ENCODE measurements at regions of chr19 and their contacts with region 1.

Region 1: GRCh38 chr19:29545866-29546582 is 20.2 kb downstream of the VSTM2B start:
- DNase-seq: no peak
- ATAC-seq: no peak
- H3K4me3 ChIP-seq: no peak overlapping the region
- H3K4me3 Mint-ChIP-seq: no peak overlapping the region
- H3K27ac ChIP-seq: no peak overlapping the region
- H3K27ac Mint-ChIP-seq: no peak overlapping the region
- H3K4me1 ChIP-seq: no peaks in the 10 kb centered on the region
- H3K4me1 Mint-ChIP-seq: no peaks in the 10 kb centered on the region
- H3K27me3 ChIP-seq: peaks cover 0 to 42% of the 10 kb centered on the region in 2 experiments
- H3K27me3 Mint-ChIP-seq: peaks cover 16 to 24% of the 10 kb centered on the region in 2 donors

Region 2: GRCh38 chr19:29393915-29394460 is 152.0 kb before region 1 on chr19:
- CTCF ChIA-PET with region 1: no interaction called
- POLR2A ChIA-PET with region 1: no interaction called
- DNase-seq: no peak
- ATAC-seq: no peak
- H3K4me3 ChIP-seq: no peak overlapping the region
- H3K4me3 Mint-ChIP-seq: no peak overlapping the region
- H3K27ac ChIP-seq: no peak overlapping the region
- H3K27ac Mint-ChIP-seq: no peak overlapping the region
- H3K4me1 ChIP-seq: no peaks in the 10 kb centered on the region
- H3K4me1 Mint-ChIP-seq: no peaks in the 10 kb centered on the region
- H3K27me3 ChIP-seq: peaks cover 0 to 29% of the 10 kb centered on the region in 2 experiments
- H3K27me3 Mint-ChIP-seq: peaks cover 8 to 11% of the 10 kb centered on the region in 2 donors

Region 3: DNA sequence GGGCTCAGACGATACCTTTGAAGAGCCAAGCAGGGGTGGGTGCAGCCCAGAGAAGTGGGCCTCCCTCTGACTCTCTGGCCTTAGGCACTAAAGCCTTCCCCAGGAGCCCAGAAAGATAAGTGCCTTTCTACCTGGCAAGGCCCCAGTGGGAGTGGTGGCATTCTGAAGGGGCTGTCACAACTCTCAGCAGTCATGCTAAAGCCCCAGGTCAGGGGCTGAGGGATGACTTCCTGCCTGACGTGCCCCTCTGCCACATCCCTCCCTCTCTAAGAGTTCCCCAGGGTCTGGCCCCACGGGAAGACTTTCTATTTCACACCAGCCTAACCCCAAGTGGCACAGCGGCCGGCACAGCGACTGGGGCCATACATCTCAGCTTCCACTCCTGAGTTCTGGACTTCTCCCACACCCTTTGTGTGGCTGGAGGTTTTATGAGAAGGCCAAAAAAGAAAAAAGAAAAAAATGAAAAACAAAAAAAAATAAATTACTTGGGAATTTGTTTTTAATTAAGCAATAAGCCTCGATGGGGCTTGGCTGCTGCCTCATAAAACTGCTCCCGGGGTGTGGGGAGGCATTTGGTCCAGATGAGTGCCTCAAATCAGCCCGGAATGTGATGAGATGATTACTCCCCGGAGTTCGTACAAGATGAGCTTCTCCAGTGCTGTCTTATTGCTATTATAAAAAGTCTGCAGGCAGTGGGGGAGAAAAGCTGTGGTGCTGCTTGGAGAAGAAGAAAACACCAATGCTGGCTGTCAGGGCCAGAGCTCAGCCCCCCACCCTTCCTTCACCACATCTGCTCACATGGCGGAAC is 90.7 kb after region 1 on chr19:
- CTCF ChIA-PET with region 1: no interaction called
- POLR2A ChIA-PET with region 1: interaction called in 1 of 2 experiments, 13 read pairs
- DNase-seq: no peak
- ATAC-seq: no peak
- H3K4me3 ChIP-seq: no peak overlapping the region
- H3K4me3 Mint-ChIP-seq: no peak overlapping the region
- H3K27ac ChIP-seq: no peak overlapping the region
- H3K27ac Mint-ChIP-seq: no peak overlapping the region
- H3K4me1 ChIP-seq: no peaks in the 10 kb centered on the region
- H3K4me1 Mint-ChIP-seq: no peaks in the 10 kb centered on the region
- H3K27me3 ChIP-seq: peaks cover 0 to 6% of the 10 kb centered on the region in 2 experiments
- H3K27me3 Mint-ChIP-seq: no peaks in the 10 kb centered on the region